A549 (cell line): ENCODE measurements at regions of chr1 and their contacts with region 1.

Region 1: DNA sequence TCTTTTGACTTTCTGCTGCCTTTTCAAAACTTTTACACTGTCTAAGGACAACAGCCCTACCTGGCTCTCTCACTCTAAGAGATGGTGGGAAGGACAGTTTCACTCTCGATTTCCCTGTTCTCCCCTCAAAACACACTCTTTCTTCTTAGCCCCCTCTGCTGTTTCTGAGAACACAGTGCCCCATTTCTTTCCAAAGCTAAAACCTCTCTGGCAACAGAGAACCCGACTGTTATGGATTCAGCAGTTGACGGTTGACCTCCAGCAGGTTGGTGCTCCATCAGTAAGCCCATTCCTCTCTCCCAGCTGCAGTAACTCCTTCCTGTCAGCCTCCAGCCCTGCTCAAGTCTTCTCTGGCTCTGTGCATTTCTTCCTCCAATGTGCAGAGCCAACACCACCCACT is 88.2 kb upstream of the ABCD3 start:
- DNase-seq: peak in 1 of 2 experiments; percentile 37
- ATAC-seq: peak; percentile 22 to 48; a peak in 3 of 6 replicates
- H3K4me3 ChIP-seq: no peak overlapping the region
- H3K27ac ChIP-seq: peak overlapping the region; percentile 39 to 68; a peak in 5 of 6 replicates
- H3K4me1 ChIP-seq: peaks cover 54% of the 10 kb centered on the region
- CTCF ChIP-seq: peak; percentile 43
- EP300 ChIP-seq: no peak
- POLR2A ChIP-seq: no peak
- RAD21 ChIP-seq: peak; percentile 70 to 73

Region 2: DNA sequence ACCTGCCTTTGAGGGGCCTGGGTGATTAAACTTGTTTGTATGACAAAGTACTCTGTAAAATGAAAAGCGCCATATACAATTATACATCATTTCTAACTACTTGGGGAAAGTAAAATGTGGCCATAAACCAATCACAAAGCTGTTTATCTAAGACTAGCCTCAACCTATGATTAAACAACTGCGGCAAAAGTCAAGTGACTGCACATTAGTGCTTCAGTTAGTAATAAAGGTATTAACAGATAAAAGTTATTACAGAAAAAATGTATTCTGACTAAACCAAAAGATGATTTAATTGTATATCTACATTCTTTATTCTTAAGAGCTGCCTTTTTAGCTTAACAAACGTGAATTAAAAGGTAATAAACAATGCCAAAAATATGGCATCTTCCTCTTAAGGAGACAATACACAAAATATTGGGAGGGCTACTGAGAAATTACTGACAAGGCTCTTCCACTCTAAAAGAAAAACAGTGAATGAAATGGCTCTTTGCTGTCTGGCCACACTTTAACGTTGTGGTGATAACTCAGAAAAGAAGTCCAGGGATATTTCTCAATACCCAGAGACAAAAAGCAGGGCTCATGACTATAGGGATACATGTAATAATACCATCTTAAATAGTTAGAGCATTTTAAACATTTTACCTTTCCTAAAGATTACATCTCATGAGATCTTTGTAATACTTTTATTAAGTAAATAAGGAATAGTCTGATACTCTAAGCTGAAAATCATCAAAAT is 101.2 kb before region 1 on chr1:
- CTCF ChIA-PET with region 1: interaction called, 34 read pairs
- POLR2A ChIA-PET with region 1: no interaction called
- DNase-seq: no peak
- ATAC-seq: no peak
- H3K4me3 ChIP-seq: no peak overlapping the region
- H3K27ac ChIP-seq: no peak overlapping the region
- H3K4me1 ChIP-seq: peaks cover 48% of the 10 kb centered on the region
- CTCF ChIP-seq: no peak
- EP300 ChIP-seq: no peak
- POLR2A ChIP-seq: no peak
- RAD21 ChIP-seq: no peak